CD4-positive, alpha-beta memory T cell (primary cell): ENCODE measurements at regions of chr4 and their contacts with region 1.

Region 1: DNA sequence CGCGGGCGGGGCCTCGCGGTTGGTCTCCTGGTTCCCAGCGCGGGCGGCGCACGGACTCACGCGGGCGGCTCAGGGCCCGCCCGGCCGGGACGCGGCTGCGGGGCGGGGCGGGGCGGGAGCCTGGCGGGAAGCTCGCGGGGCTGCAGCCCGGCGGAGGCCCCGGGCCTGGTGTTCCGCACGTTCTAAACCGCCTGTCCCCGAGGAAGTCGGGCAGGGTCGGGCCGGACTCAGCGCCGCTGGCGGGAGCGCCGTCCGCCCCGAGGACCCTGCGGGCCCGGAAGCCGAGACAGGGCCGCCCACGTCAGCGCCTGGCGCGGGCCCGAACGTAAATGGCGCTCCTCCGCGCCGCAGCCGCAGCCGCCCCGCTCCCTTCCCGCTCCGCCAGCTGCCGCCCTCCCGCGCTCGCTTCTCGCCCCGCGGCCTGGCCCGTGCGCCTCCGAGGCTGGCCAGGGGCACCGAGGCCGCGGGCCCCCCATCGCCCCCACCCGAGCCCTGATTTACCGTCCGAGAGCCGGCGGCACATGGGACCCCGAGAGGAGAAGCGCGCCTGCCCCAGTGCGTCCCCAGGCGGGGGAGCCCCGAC is 309 bp upstream of the CTBP1 start:
- DNase-seq: peak; percentile 77 to 93 (median 90)
- H3K4me3 ChIP-seq: peak overlapping the region; percentile 68 to 73
- H3K4me3 Mint-ChIP-seq: peak overlapping the region; percentile 86 to 92 (median 90)
- H3K27ac ChIP-seq: peak overlapping the region; percentile 88
- H3K27ac Mint-ChIP-seq: peak overlapping the region; percentile 93 to 99 (median 96)
- H3K4me1 ChIP-seq: peaks cover 74% of the 10 kb centered on the region
- H3K4me1 Mint-ChIP-seq: peaks cover 39 to 79% (median 67%) of the 10 kb centered on the region in 4 donors
- H3K27me3 ChIP-seq: no peaks in the 10 kb centered on the region
- H3K27me3 Mint-ChIP-seq: no peaks in the 10 kb centered on the region

Region 2: DNA sequence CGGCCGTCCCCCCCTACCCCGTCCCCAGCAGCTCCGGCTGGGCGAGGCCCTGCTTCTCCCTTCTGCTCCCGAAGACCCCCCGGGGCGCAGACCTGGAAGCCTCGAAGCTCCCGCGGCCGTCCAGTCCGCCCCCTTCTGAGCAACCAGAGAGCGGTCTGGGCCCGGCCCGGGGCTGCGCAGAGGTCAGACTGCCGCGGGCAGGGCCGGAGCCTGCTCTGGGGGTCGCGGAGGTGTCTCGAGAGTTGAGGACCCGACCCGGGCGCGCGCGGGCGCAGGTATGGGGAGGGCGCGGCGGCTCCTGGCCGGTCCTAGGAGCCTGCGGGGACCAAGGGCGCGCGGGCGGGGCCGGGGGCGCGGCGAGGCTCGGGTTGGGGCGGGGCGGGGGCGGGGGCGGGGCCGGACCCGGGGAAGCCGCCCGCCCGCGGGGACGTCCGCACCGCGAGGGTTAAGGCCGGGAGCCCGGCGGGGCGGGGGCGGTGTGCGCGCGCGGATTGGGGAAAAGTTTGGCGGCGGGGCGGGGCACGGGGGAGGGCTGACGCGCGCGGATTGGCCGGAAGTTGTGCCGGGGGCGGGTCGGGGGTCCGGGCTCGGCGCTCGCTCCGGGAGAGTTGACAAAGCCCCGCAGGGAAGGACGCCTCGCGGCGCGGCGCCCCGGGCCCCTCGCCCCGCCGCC is 238.1 kb before region 1 on chr4 and contains the start of gene FGFRL1:
- CTCF ChIA-PET with region 1: no interaction called
- POLR2A ChIA-PET with region 1: interaction called, 3 read pairs
- intact Hi-C with region 1: loop called (anchors 5 kb)
- DNase-seq: peak; percentile 86 to 90 (median 87)
- H3K4me3 ChIP-seq: peak within 1 kb of the TSS; percentile 22 to 75
- H3K4me3 Mint-ChIP-seq: peak within 1 kb of the TSS; percentile 85 to 94 (median 90)
- H3K27ac ChIP-seq: peak within 1 kb of the TSS; percentile 76
- H3K27ac Mint-ChIP-seq: peak within 1 kb of the TSS; percentile 94 to 98 (median 97)
- H3K4me1 ChIP-seq: peaks cover 25% of the 10 kb centered on the region
- H3K4me1 Mint-ChIP-seq: peaks cover 6 to 17% (median 13%) of the 10 kb centered on the region in 4 donors
- H3K27me3 ChIP-seq: peaks cover 7% of the 10 kb centered on the region
- H3K27me3 Mint-ChIP-seq: peaks cover 14 to 23% of the 10 kb centered on the region in 2 donors
- total RNA-seq, gene FGFRL1: 22.4 TPM

Region 3: GRCh38 chr4:1156069-1156468 is 93.2 kb before region 1 on chr4:
- CTCF ChIA-PET with region 1: no interaction called
- POLR2A ChIA-PET with region 1: no interaction called
- intact Hi-C with region 1: no loop called
- DNase-seq: no peak
- H3K4me3 ChIP-seq: no peak overlapping the region
- H3K4me3 Mint-ChIP-seq: no peak overlapping the region
- H3K27ac ChIP-seq: no peak overlapping the region
- H3K27ac Mint-ChIP-seq: peak overlapping the region in 1 of 7 donors; percentile 68
- H3K4me1 ChIP-seq: no peaks in the 10 kb centered on the region
- H3K4me1 Mint-ChIP-seq: no peaks in the 10 kb centered on the region
- H3K27me3 ChIP-seq: no peaks in the 10 kb centered on the region
- H3K27me3 Mint-ChIP-seq: peaks cover 13% of the 10 kb centered on the region in 2 donors

Region 4: DNA sequence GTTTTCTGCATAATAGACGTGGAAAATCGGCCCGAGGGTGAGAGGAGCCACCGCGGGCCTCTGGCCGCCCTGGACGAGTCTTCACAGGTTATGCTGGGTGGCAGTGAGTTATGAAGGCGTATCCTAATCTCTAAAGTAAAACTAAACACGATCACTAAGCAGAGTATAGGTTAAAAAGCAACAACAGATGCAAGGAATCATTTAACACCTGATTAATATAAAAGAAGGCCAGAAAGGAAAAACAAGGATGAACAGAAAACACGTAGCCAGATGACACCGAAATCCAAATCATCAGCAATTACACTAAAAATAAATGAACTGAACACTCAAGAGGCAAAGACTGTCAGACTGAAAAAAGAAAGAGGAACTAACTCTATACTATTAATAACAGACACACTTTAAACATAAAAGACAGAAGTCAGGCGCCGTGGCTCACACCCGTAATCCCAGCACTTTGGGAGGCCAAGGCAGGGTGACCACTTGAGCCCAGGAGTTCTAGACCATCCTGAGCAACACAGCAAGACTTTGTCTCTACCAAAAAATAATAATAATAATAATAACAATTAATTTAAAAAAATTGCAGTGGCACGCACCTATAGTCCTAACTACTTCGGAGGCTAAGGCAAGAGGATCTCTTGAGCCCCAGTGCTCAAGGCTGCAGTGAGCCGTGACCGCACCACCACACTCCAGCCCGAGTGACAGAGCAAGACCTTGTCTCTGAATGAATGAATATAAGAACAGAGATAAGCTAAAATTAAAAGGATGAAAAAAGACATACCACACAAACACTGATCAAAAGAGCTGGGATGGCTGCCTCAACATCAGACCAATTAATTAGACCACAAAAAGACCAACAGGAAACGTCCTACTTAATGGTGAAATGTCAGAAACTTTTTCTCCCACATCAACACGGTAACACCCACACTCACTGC is 30.3 kb before region 1 on chr4:
- CTCF ChIA-PET with region 1: no interaction called
- POLR2A ChIA-PET with region 1: interaction called, 35 read pairs
- intact Hi-C with region 1: no loop called
- DNase-seq: no peak
- H3K4me3 ChIP-seq: no peak overlapping the region
- H3K4me3 Mint-ChIP-seq: peak overlapping the region in 6 of 8 donors; percentile 21 to 56 (median 42)
- H3K27ac ChIP-seq: no peak overlapping the region
- H3K27ac Mint-ChIP-seq: peak overlapping the region; percentile 7 to 86 (median 58)
- H3K4me1 ChIP-seq: peaks cover 40% of the 10 kb centered on the region
- H3K4me1 Mint-ChIP-seq: peaks cover 25 to 58% (median 37%) of the 10 kb centered on the region in 4 donors
- H3K27me3 ChIP-seq: no peaks in the 10 kb centered on the region
- H3K27me3 Mint-ChIP-seq: no peaks in the 10 kb centered on the region

Region 5: GRCh38 chr4:1289207-1290164 is 40.2 kb after region 1 on chr4 and contains the start of gene MAEA:
- CTCF ChIA-PET with region 1: interaction called, 3 read pairs
- POLR2A ChIA-PET with region 1: interaction called, 35 read pairs
- intact Hi-C with region 1: loop called (anchors 1 kb)
- DNase-seq: peak; percentile 97
- H3K4me3 ChIP-seq: peak within 1 kb of the TSS; percentile 78 to 86
- H3K4me3 Mint-ChIP-seq: peak within 1 kb of the TSS; percentile 90 to 94 (median 92)
- H3K27ac ChIP-seq: peak within 1 kb of the TSS; percentile 76
- H3K27ac Mint-ChIP-seq: peak within 1 kb of the TSS; percentile 82 to 97 (median 95)
- H3K4me1 ChIP-seq: peaks cover 49% of the 10 kb centered on the region
- H3K4me1 Mint-ChIP-seq: peaks cover 25 to 48% (median 39%) of the 10 kb centered on the region in 4 donors
- H3K27me3 ChIP-seq: no peaks in the 10 kb centered on the region
- H3K27me3 Mint-ChIP-seq: no peaks in the 10 kb centered on the region
- total RNA-seq, gene MAEA: 101 to 106 TPM

Region 6: GRCh38 chr4:1870578-1871443 is 621.6 kb after region 1 on chr4 and contains the start of gene NSD2:
- CTCF ChIA-PET with region 1: no interaction called
- POLR2A ChIA-PET with region 1: interaction called, 8 read pairs
- intact Hi-C with region 1: loop called (anchors 2 kb)
- DNase-seq: peak; percentile 84 to 89 (median 88)
- H3K4me3 ChIP-seq: peak within 1 kb of the TSS; percentile 47 to 84
- H3K4me3 Mint-ChIP-seq: peak within 1 kb of the TSS; percentile 86 to 97 (median 89)
- H3K27ac ChIP-seq: peak within 1 kb of the TSS; percentile 91
- H3K27ac Mint-ChIP-seq: peak within 1 kb of the TSS; percentile 95 to 99 (median 98)
- H3K4me1 ChIP-seq: peaks cover 36% of the 10 kb centered on the region
- H3K4me1 Mint-ChIP-seq: peaks cover 21 to 39% (median 32%) of the 10 kb centered on the region in 4 donors
- H3K27me3 ChIP-seq: no peaks in the 10 kb centered on the region
- H3K27me3 Mint-ChIP-seq: peaks cover 0 to 3% of the 10 kb centered on the region in 2 donors
- total RNA-seq, gene NSD2: 54.8 to 57.4 TPM

Region 7: DNA sequence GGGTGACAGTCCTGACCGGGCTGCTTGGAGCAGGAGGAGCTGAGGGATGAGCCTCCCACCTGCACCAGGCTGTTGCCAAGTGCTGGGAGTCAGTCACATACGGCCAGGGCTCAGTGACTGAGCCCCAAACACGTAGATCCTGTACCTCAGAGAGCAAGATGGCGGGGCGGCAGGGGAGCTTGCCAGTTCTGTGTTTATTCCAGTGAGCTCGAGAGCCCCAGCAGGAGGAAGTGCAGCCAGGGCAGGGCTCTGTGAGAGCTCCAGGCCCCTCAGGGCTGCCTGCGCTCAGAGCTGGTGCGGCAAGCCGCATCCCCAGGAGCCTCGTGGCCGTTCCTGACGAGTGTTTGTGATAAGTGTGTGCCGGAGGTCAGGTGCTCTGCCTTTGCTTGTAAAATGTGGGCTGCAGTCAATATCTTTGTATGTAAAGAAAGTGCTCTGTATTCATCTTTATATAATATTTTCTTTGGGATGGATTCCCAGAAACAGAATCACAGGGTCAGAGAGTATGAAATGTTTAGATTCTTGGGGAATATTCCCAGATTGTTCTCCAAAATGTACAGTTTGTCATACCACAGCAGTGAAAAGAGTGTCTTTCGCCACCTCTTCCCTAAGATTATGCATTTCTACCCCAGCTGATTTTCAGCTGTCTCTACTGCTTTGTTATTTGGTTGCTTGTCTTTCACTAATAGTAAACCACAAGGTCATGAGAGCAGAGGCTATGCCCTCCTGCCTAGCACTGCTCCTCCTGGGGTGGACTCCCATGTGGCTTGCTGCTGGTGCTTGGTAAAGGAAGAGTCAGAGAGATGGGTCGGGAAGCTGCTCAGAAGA is 709.3 kb after region 1 on chr4:
- CTCF ChIA-PET with region 1: no interaction called
- POLR2A ChIA-PET with region 1: no interaction called
- intact Hi-C with region 1: no loop called
- DNase-seq: no peak
- H3K4me3 ChIP-seq: no peak overlapping the region
- H3K4me3 Mint-ChIP-seq: no peak overlapping the region
- H3K27ac ChIP-seq: no peak overlapping the region
- H3K27ac Mint-ChIP-seq: peak overlapping the region in 2 of 7 donors; percentile 7 to 23
- H3K4me1 ChIP-seq: no peaks in the 10 kb centered on the region
- H3K4me1 Mint-ChIP-seq: no peaks in the 10 kb centered on the region
- H3K27me3 ChIP-seq: no peaks in the 10 kb centered on the region
- H3K27me3 Mint-ChIP-seq: no peaks in the 10 kb centered on the region